ENCODE measurements at regions of chr18 and their contacts with region 1.

Region 1: GRCh38 chr18:6885992-6886796 is 156.7 kb downstream of the ARHGAP28 start:
- DNase-seq: no peak
- H3K4me3 ChIP-seq: no peak overlapping the region
- H3K27ac ChIP-seq: no peak overlapping the region
- H3K4me1 ChIP-seq: no peaks in the 10 kb centered on the region
- H3K27me3 ChIP-seq: no peaks in the 10 kb centered on the region
- CTCF ChIP-seq: peak; percentile 60 to 62

Region 2: DNA sequence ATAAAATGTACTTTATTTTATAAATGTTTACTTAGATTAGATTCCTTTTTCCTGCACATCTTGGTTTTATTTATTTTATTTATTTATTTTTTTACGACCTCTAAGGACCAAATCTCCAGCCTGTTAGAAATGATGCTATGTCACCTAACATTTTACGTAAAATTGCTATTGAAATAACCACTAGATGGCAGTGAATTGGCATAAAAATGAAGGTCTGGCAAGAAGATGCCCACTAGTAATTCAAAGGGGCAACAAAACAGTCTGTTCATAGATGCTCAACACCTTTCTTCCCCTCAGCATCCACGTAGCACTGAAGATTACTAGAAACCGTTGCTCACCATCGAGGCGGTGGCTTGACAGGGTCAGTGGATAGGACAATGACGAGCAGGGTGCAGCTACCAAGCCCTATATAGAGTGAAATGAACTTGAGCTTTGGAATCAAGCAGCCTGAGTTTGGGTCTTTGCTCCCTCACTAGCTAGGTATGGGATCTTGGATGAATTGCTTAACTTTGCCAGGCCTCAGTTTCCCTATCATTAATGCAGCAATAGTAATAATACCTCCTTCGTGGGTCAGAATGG is 342.8 kb before region 1 on chr18:
- intact Hi-C with region 1: loop called (anchors 10 kb)
- DNase-seq: no peak
- H3K4me3 ChIP-seq: no peak overlapping the region
- H3K27ac ChIP-seq: no peak overlapping the region
- H3K4me1 ChIP-seq: no peaks in the 10 kb centered on the region
- H3K27me3 ChIP-seq: no peaks in the 10 kb centered on the region
- CTCF ChIP-seq: peak; percentile 18 to 23

Region 3: GRCh38 chr18:6948281-6949055 is 62.3 kb after region 1 on chr18:
- intact Hi-C with region 1: no loop called
- DNase-seq: no peak
- H3K4me3 ChIP-seq: no peak overlapping the region
- H3K27ac ChIP-seq: no peak overlapping the region
- H3K4me1 ChIP-seq: no peaks in the 10 kb centered on the region
- H3K27me3 ChIP-seq: no peaks in the 10 kb centered on the region
- CTCF ChIP-seq: no peak

Region 4: GRCh38 chr18:7021994-7022840 is 136.0 kb after region 1 on chr18:
- intact Hi-C with region 1: no loop called
- DNase-seq: no peak
- H3K4me3 ChIP-seq: no peak overlapping the region
- H3K27ac ChIP-seq: no peak overlapping the region
- H3K4me1 ChIP-seq: no peaks in the 10 kb centered on the region
- H3K27me3 ChIP-seq: no peaks in the 10 kb centered on the region
- CTCF ChIP-seq: no peak

Region 5: GRCh38 chr18:7084080-7085075 is 198.2 kb after region 1 on chr18:
- intact Hi-C with region 1: no loop called
- DNase-seq: no peak
- H3K4me3 ChIP-seq: no peak overlapping the region
- H3K27ac ChIP-seq: peak overlapping the region; percentile 61 to 74
- H3K4me1 ChIP-seq: peaks cover 0 to 49% (median 8%) of the 10 kb centered on the region in 4 donors
- H3K27me3 ChIP-seq: no peaks in the 10 kb centered on the region
- CTCF ChIP-seq: no peak

Measured in tibial artery (tissue), 4 donors.